PC-3 (cell line): ENCODE measurements at regions of chr2 and their contacts with region 1.

Region 1: DNA sequence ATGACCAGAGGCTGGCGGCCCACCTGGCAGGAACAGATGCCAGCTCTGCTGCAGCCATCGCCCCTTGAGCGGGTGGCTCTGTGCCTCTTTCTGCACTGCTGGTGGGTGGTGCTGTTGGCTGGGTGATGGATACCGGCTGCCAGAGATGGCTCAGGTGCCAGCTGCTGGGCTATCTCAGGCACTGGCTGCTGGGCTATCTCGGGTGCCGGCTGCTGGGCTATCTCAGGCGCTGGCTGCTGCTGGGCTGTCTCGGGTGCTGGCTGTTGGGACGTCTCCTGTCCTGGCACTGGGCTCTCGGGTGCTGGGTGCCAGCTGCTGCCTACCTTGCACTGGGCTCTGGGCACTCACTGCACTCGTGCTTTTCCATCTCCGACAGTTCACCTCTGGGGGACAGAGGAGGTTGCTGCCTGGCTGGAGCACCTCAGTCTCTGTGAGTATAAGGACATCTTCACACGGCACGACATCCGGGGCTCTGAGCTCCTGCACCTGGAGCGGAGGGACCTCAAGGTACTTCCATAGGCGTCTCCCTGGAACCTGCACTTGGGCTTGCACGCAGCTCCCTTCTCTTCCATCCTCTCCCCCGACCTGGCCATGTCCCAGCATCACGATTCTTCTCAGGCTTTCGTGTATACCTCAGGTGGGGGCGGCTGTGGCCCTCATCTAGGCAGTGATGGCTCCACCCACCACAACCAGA is 98.4 kb downstream of the USP40 start:
- DNase-seq: no peak
- ATAC-seq: no peak
- H3K4me3 ChIP-seq: no peak overlapping the region
- H3K27ac ChIP-seq: no peak overlapping the region
- H3K4me1 ChIP-seq: no peaks in the 10 kb centered on the region
- H3K27me3 ChIP-seq: no peaks in the 10 kb centered on the region
- CTCF ChIP-seq: no peak

Region 2: DNA sequence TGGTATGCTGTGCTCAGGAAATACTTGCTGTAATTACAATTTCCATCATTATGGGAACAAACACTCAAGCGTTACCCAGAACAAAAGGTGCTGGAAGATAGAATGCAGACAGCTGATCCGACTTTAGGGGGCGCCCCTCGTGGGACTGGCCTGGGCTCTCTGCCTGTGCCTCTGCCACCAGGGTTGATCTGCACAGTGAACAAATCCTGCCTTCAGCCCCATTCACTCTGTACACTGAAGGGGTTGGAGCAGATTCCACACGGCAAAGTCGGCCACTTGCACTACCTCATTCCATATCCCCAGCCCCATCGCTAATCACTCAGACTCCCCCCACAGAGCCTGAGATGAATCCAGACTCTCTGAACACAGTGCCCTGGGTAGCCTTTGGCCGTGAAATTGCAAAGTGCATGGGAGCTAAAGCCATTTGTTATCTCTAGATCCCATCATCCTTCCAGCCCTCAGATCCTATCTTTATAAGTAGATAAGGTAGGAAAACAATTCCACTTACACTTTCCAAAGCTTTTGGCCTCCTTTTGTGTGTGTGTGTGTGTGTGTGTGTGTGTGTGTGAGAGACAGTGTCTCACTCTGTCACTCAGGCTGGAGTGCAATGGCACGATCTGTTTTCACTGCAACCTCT is 338.7 kb before region 1 on chr2:
- CTCF ChIA-PET with region 1: no interaction called
- POLR2A ChIA-PET with region 1: interaction called, 15 read pairs
- intact Hi-C with region 1: no loop called
- DNase-seq: peak; percentile 8
- ATAC-seq: no peak
- H3K4me3 ChIP-seq: no peak overlapping the region
- H3K27ac ChIP-seq: no peak overlapping the region
- H3K4me1 ChIP-seq: no peaks in the 10 kb centered on the region
- H3K27me3 ChIP-seq: no peaks in the 10 kb centered on the region
- CTCF ChIP-seq: peak; percentile 44; the same call in 1 of the 2 replicates

Region 3: DNA sequence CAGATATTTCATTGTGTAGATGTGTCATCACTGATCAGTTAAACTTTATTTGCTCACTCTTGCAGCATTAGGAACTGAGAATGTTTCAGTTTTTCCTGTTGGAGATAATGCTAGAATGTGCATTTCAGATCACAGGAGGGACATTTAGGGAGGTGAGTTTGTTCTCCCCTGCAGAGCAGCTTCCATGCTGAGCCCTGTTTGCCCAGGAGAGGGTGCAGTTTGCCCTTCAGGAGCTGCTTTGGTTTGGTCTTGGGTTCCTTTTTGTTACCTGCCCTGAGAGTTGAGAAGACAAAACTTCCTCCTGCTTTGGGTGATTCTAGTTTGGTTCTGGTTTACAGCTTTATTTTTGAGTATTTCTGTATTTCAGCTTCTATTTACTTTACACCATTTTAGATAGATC is 64.0 kb before region 1 on chr2:
- CTCF ChIA-PET with region 1: no interaction called
- POLR2A ChIA-PET with region 1: no interaction called
- intact Hi-C with region 1: no loop called
- DNase-seq: peak; percentile 77
- ATAC-seq: peak; percentile 86
- H3K4me3 ChIP-seq: no peak overlapping the region
- H3K27ac ChIP-seq: no peak overlapping the region
- H3K4me1 ChIP-seq: no peaks in the 10 kb centered on the region
- H3K27me3 ChIP-seq: no peaks in the 10 kb centered on the region
- CTCF ChIP-seq: peak; percentile 93

Region 4: GRCh38 chr2:233443468-233444183 is 24.6 kb before region 1 on chr2:
- CTCF ChIA-PET with region 1: no interaction called
- POLR2A ChIA-PET with region 1: no interaction called
- intact Hi-C with region 1: no loop called
- DNase-seq: peak; percentile 84
- ATAC-seq: peak; percentile 82
- H3K4me3 ChIP-seq: no peak overlapping the region
- H3K27ac ChIP-seq: no peak overlapping the region
- H3K4me1 ChIP-seq: no peaks in the 10 kb centered on the region
- H3K27me3 ChIP-seq: no peaks in the 10 kb centered on the region
- CTCF ChIP-seq: peak; percentile 90

Region 5: GRCh38 chr2:233501198-233502076 is 33.2 kb after region 1 on chr2:
- CTCF ChIA-PET with region 1: no interaction called
- POLR2A ChIA-PET with region 1: no interaction called
- intact Hi-C with region 1: no loop called
- DNase-seq: peak; percentile 73
- ATAC-seq: peak; percentile 94
- H3K4me3 ChIP-seq: no peak overlapping the region
- H3K27ac ChIP-seq: peak overlapping the region; percentile 68
- H3K4me1 ChIP-seq: peaks cover 25% of the 10 kb centered on the region
- H3K27me3 ChIP-seq: no peaks in the 10 kb centered on the region
- CTCF ChIP-seq: no peak